Head of caudate nucleus (tissue), 42 donors: ENCODE measurements at regions of chr1 and their contacts with region 1.

Region 1: GRCh38 chr1:27284425-27285273 is 37.3 kb upstream of the TMEM222 start:
- DNase-seq: peak; percentile 66 to 96 (median 87)

Region 2: GRCh38 chr1:27044613-27045151 is 240.0 kb before region 1 on chr1:
- intact Hi-C with region 1: loop called (anchors 10 kb)
- DNase-seq: peak; percentile 68 to 96 (median 91)

Region 3: DNA sequence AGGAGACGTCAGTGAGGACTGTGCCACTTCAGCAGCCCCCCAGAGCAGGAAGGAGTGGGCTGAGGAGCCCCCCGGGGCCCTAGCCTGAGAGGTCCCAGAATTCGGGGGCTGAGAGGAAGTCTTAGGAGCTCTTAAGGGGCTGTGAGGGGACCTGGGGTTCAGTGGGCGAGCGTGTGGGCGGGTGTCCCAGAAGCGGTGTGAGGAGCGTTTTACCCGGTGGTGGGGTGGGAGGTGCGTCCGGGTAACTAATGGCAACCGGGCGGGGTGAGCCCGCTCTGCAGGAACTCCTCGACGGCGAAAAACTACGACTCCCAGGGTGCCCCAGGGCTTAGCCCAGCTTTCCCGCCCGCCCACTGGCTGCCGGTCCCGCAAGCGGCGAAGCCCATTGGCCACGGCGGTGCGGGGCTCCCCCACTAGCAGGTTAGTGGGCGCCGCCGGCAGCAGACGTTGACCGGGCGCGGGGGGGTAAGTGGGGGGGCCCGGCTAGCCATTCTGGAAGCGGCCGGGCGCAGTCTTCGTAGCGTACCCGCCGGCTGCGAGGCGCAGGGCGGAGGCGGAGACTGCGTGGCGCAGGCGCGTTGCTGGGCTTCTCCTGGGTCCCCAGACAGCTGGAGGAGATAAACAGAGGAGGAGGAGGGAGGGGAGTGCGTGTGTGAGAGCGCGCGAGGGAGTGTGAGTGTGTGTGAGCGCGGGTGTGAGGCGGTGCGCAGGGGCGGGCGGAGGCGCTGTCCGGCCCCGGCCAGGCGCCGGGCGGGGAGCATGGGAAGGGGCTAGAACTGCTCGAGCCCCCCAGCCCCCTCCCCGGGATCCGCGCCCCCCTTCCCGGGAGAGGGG is 50.4 kb before region 1 on chr1 and contains the start of gene WDTC1:
- intact Hi-C with region 1: no loop called
- DNase-seq: peak; percentile 95 to 100 (median 99)